H1 (cell line): ENCODE measurements at regions of chr9 and their contacts with region 1.

Region 1: DNA sequence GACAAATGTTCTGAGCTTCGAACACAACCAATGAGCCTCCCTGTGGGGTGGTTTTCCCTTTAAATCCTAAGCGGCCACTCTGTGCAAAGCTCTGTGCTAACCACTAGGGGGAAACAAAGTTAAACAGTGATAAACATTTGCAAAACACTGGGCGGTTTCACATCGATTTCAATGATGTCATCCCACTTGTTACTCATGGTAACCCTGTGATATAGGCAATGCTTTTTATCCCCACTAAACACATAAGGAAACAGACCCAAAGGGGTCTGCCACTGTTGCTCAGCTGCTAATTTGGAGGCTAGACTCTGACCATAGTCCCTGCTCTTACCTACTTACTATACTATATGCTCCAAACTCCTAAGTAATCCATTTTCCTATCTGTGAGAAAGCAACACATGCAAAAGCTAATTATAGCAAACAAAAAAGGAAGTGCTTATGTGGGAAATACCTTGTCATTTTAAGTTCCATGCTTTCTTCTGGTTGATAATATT is 57.3 kb downstream of the PTPN3 start:
- DNase-seq: peak in 1 of 2 experiments; percentile 63
- H3K4me3 ChIP-seq: no peak overlapping the region
- H3K27ac ChIP-seq: no peak overlapping the region
- H3K4me1 ChIP-seq: peaks cover 0 to 6% (median 0%) of the 10 kb centered on the region in 4 experiments; a peak in 1 of 7 replicates
- H3K27me3 ChIP-seq: no peaks in the 10 kb centered on the region
- CTCF ChIP-seq: peak in 2 of 3 experiments; percentile 75 to 88; a peak in 3 of 4 replicates
- EP300 ChIP-seq: no peak
- POLR2A ChIP-seq: peak; percentile 45 to 60; a peak in 2 of 3 replicates
- RAD21 ChIP-seq: peak; percentile 58 to 66

Region 2: GRCh38 chr9:109355222-109355955 is 85.5 kb before region 1 on chr9:
- CTCF ChIA-PET with region 1: no interaction called
- POLR2A ChIA-PET with region 1: no interaction called
- DNase-seq: no peak
- H3K4me3 ChIP-seq: no peak overlapping the region
- H3K27ac ChIP-seq: no peak overlapping the region
- H3K4me1 ChIP-seq: no peaks in the 10 kb centered on the region
- H3K27me3 ChIP-seq: no peaks in the 10 kb centered on the region
- CTCF ChIP-seq: no peak
- EP300 ChIP-seq: no peak
- POLR2A ChIP-seq: no peak
- RAD21 ChIP-seq: no peak

Region 3: DNA sequence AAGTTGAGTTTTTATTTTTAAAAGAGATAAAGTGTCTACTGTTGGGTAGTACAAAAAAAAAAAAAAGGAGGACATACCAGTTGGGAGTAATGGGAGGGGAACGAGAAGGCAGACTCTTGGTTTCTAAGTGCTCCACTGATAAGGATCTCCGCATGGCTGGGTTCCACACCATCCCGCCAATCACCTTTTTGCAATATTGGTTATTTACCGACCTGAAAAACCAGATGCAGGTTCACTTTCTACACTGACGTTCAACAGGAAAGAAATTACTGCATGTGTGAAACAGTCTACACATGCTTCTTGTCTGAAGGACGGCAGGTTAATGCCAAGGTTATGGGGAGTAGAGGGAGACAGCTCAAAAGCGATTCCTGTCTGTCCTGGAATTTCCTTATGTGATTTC is 18.2 kb before region 1 on chr9:
- CTCF ChIA-PET with region 1: interaction called, 18 read pairs
- POLR2A ChIA-PET with region 1: no interaction called
- DNase-seq: no peak
- H3K4me3 ChIP-seq: no peak overlapping the region
- H3K27ac ChIP-seq: no peak overlapping the region
- H3K4me1 ChIP-seq: peaks cover 0 to 5% (median 0%) of the 10 kb centered on the region in 4 experiments; a peak in 1 of 7 replicates
- H3K27me3 ChIP-seq: no peaks in the 10 kb centered on the region
- CTCF ChIP-seq: no peak
- EP300 ChIP-seq: no peak
- POLR2A ChIP-seq: no peak
- RAD21 ChIP-seq: no peak

Region 4: GRCh38 chr9:109430231-109430630 is 10.6 kb before region 1 on chr9:
- CTCF ChIA-PET with region 1: interaction called, 10 read pairs
- POLR2A ChIA-PET with region 1: no interaction called
- DNase-seq: no peak
- H3K4me3 ChIP-seq: no peak overlapping the region
- H3K27ac ChIP-seq: no peak overlapping the region
- H3K4me1 ChIP-seq: no peaks in the 10 kb centered on the region
- H3K27me3 ChIP-seq: no peaks in the 10 kb centered on the region
- CTCF ChIP-seq: no peak
- EP300 ChIP-seq: no peak
- POLR2A ChIP-seq: no peak
- RAD21 ChIP-seq: no peak

Region 5: DNA sequence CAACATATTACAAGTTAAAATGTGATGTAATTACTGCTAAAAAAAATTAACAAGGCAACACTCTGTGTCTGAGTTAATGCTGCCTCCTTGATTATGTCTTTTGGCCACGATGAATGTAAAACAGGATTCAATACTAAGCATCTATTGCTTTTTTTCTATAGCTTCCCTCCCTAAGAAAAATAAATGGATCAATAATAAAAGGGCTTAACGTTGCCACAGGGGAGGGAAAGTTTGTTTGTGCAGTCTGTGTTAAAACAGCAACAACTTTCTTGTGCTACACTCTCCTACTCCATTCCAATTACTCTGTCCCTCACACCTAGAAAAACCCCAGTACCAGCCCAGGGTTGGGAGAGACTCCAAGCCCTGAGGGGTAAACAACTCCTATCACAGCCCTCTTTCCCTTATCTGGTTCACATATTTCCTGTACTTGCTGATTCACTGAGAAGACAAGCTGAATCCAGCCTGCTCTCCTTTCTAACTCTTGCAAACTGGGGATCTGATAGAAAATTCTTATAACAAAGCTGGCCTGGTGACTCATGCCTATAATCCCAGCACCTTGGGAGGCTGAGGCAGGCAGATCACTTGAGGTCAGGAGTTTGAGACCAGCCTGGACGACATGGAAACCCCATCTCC is 12.5 kb after region 1 on chr9:
- CTCF ChIA-PET with region 1: interaction called, 151 read pairs
- POLR2A ChIA-PET with region 1: interaction called, 3 read pairs
- DNase-seq: no peak
- H3K4me3 ChIP-seq: no peak overlapping the region
- H3K27ac ChIP-seq: no peak overlapping the region
- H3K4me1 ChIP-seq: peaks cover 0 to 6% (median 3%) of the 10 kb centered on the region in 4 experiments; a peak in 4 of 7 replicates
- H3K27me3 ChIP-seq: no peaks in the 10 kb centered on the region
- CTCF ChIP-seq: no peak
- EP300 ChIP-seq: no peak
- POLR2A ChIP-seq: no peak
- RAD21 ChIP-seq: no peak